RWPE1 (cell line): ENCODE measurements at regions of chr19 and their contacts with region 1.

Region 1: GRCh38 chr19:18388100-18388959 is 2.4 kb downstream of the GDF15 start:
- DNase-seq: peak; percentile 74
- H3K27ac ChIP-seq: peak overlapping the region; percentile 51
- CTCF ChIP-seq: peak; percentile 100

Region 2: DNA sequence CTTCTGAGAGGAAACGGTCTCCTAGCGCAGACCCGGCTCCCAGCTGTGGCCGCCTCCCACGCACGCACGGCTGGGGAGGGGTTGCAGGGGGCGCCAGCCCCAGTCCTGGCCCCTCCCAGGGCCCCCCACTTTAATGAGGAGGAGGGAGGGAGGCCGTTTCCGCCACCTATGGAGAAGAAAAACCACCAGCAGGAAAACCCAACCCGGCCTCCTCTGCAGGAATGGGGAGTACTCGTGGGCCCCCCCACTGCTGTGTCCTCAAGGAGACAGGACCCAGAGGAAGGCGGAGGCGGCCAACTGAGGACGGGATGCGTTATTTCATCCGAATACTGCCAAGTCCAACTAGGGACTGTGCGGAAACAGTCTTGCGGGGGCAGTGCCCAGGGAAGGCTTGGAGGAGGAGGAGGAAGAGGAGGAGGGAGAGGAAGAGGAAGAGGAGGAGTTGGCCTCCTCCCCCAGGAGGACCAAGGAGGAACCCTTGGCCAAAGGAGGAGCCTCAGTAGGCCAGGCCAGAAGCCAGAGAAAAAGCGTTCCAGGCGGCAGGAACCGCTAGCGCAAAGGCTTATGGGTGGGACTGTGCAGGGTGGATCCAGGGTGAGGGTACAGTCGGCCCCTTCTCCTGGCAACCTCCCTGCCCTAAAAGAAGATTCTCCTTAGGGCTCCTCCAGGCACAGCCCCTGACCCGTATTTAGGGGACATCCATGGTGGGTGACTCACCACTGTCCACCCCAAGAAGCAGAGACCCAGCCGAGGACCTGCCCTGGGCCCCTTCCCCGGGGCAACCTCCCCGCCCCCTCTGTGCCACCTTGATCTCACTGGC is 27.1 kb after region 1 on chr19:
- CTCF ChIA-PET with region 1: interaction called, 16 read pairs
- POLR2A ChIA-PET with region 1: interaction called, 3 read pairs
- DNase-seq: no peak
- H3K27ac ChIP-seq: peak overlapping the region; percentile 86
- CTCF ChIP-seq: no peak

Region 3: DNA sequence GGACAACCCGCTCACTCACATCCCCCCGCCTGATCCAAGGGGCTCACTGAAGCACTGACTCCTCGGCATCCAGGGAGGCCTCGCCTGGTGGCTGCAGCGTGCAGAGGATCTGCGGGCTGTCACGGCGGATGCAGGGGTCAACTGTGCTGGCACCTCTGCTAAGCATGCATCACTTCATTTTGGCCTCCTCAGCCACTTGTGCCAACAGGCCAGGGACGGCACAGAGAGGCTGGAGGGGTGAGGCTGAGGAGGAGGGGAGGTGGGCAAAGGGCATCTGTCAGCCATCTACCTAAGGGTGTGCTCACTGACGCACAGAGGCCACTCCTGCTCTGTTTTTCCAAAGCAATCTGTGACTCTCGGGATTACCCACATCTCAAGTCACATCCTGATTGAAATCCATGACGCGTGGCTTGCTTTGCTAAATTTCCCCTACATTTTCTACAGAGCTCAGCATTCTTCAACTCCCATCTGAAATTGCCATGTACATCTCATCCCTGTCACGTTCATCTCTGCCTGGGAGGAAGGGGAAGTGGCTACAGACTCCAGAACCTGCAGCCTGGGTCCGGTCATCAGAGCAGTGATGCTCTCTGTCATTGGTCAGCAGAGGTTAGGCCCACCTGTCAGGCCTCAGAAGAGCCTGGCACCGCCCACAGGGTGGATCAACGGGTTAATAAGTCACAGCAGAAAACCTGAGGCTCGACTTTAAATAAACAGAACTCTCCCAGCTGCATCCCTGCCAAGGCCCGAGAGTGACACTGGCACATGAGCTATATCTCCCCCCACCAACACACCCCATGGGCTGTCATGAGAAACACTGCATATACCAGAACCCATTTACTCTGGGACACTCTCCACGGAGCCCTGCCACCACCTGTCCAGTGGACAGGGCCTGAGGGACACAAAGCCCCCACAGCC is 115.9 kb after region 1 on chr19:
- CTCF ChIA-PET with region 1: no interaction called
- POLR2A ChIA-PET with region 1: no interaction called
- DNase-seq: no peak
- H3K27ac ChIP-seq: peak overlapping the region; percentile 60
- CTCF ChIP-seq: no peak